GM13977 (cell line): ENCODE measurements at regions of chr17 and their contacts with region 1.

Region 1: DNA sequence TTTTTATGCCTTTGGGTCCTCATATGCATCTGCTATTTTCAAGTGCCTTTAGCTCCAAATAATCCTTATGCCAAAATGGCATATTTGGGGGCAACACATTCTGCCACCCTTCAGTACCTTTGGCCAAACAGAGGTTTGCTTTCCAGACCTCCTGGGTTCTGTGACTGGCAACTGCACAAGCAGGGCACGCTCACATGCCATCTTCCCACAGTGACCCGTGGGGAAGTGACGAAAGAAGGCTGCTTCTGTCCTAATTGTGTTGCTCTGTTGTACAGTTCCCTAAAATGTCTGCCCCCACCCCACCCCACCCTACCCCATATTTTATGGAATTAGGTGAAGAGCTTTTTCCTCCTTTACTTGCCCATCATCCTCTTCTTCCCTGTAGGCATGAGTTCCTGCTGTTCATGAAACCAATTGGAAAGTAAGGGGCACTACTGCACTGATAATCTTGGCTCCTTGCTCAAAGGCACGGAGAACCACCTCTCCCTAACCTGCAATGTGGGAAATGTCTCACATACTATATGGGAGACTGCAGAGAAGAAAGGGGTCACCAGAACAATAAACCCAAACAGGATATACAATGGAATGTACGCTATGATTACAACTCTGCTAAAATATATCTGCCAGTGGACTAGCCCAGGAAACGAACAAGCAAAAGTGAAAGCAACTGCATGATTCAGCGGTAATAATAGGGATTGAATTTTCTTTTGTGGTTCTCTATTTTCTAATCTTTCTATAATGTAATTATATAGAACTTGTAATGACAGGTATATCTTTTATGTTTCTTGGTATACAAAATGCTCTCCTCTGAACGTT is 3.3 kb upstream of the SLFN12L start:
- DNase-seq: no peak
- CTCF ChIP-seq: no peak

Region 2: DNA sequence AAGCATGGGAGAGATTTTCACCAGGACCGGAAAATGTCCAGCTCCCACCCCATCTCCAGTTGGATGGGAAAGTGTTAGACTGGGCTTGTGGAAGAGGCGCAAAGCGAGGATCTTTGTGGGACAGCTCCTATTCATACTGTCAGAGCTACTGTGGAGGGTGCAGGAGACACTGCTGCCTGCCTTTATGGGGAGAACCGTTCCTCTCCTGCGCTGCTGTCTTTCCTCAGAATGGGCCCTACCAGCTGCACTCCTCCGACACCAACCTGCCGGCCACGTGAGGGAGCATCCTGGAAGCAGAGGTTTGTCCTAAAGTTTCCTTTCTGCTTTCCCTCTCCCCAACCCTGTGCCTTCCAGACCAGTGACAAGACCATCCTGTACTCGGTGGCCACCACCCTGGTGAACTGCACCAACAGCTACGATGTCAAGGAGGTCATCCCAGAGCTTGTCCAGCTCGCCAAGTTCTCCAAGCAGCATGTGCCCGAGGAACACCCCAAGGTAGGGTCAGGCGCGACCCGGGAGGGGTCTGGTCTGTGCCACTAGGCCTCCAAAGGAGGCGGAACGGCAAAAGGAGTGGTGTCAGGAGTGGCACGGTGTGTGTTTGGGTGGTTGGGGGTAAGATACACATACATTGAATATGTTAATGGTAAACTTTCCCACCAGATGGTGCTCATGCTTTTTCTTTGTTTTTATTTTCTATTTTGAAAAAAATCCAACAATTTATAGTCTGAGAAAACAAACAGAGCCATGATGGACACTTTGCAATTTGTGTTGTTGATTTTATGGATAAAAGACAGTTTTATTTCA is 369.6 kb before region 1 on chr17:
- in situ Hi-C with region 1: loop called (anchors 25 kb)
- DNase-seq: peak; percentile 54
- CTCF ChIP-seq: peak; percentile 30

Region 3: GRCh38 chr17:35312790-35313711 is 227.7 kb before region 1 on chr17:
- in situ Hi-C with region 1: loop called (anchors 10 kb)
- DNase-seq: peak; percentile 69
- CTCF ChIP-seq: peak; percentile 79